BJ (cell line): ENCODE measurements at regions of chr2 and their contacts with region 1.

Region 1: DNA sequence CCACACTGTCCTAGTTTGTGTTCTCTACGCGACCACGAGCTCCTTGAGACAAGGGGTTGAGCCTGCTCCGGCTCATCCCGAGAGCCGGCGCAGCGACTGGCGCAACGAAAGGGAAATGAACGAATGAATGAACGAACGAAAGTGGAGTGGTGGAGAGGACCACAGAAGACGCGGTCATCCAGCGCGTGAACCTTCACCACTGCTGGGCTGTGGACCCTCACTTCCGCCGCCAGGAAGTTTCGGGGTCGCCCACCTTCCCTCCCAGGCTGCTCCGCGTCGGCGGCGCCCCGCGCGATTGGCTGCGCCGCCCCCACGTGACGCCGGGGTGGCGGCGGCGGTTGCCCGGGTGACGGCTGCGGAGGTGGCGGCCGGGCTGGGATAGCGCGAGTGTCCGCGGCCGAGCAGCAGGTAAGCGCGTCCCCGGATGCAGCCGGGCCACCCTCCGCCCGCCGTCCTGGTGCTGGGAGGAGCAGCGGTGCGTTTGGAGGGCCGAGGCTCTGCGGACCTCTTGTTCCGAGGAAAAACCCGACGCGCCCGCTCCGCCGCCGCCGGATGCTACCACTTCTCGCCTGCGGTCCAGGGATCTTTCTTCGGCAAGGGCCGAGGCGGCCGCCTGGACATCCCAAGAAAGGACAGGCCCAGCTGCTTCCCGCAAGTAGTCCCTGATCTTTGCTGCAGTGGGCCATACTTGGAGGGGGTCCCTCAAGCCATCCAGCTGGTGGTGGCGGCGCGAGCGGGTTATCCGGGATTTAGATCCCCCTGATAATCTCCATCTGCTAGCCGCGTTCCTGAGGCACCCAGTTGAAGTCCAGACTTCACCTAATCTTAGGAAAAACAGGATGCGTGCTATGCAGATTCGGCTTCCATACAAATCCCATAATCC is at the start of gene ARMC9:
- DNase-seq: no peak
- H3K4me3 ChIP-seq: peak within 1 kb of the TSS; percentile 71
- H3K27me3 ChIP-seq: no peaks in the 10 kb centered on the region
- CTCF ChIP-seq: no peak
- polyA plus RNA-seq, gene ARMC9: 66.4 and 83.1 TPM in 2 replicates

Region 2: DNA sequence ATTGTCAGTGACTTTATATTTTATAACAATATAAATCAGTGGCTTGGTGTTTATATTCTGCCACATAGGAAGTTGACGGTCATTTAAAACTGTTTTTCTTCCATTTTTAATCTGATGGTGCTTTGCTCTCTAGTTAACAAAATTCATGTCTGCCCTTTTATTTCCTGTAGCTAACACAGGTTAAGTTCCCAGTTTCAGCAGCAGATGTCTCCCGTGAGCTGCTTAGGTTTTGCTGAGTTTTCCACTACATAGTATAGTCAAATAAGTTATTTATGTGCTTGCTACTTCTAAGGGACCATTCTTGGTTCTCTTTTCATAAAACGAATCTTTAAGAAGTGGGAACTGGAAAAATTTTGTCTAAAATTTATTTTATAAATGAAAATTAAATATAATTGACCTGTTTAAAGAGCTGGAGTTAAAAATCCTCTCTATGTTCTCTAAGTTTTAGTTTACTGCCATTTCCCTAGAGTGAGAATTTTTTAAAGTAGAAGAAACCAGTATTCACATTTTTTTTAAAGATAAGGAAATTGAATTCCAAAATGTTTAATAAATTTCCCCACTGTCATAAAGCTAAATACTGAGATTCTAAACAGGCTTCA is 94.3 kb before region 1 on chr2:
- CTCF ChIA-PET with region 1: interaction called, 104 read pairs
- POLR2A ChIA-PET with region 1: no interaction called
- DNase-seq: peak; percentile 31
- H3K4me3 ChIP-seq: no peak overlapping the region
- H3K27me3 ChIP-seq: no peaks in the 10 kb centered on the region
- CTCF ChIP-seq: peak; percentile 84

Region 3: GRCh38 chr2:231110551-231110950 is 88.0 kb before region 1 on chr2:
- CTCF ChIA-PET with region 1: interaction called, 104 read pairs
- POLR2A ChIA-PET with region 1: no interaction called
- DNase-seq: no peak
- H3K4me3 ChIP-seq: no peak overlapping the region
- H3K27me3 ChIP-seq: no peaks in the 10 kb centered on the region
- CTCF ChIP-seq: 0 out of 2 replicates have a peak, but pooled peaks have one; percentile 33